PC-3 (cell line): ENCODE measurements at regions of chr17 and their contacts with region 1.

Region 1: DNA sequence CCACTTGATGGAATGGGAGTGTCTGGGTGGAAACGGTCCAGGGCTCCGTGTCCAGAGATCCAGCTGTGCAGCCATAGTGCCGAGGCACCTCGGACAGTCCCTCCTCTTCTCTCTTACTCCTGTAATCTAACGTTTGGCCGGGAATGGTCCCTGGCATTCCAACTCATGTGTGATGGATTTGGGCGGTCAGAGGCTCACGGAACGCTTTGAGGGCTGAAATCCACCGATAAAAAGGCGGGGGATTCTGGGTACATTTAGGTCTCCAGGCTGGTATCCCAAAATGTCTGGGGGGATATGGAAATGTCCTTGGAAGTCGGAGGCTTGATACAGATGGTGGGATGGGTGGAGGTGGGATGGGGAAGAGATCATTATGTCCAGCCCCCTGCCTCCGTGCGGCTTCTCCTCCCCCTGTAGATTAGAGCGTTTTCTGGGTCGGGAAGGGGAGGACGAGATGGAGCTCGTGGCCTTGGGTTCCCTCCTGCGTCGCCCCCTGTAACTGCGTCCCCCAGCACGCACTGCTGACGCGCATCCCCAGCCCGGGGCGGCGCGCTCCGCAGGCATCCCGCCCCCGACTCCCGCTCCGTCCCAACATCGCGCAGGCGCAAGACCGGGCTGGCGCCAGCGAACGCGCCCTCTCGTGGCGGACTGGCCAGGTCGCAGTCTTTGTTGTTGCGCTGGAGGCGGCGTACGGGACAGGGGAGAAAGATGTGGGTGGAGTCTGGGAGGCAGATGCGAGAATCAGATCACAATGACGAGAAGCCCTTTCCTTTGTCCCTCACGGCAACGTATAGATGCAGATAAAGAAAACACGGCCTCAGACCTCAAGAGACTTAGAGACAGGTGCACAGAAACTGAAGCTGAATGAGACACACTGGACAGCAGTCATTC is 4.5 kb upstream of the SGCA start:
- DNase-seq: peak; percentile 95
- ATAC-seq: peak; percentile 98
- H3K4me3 ChIP-seq: peak overlapping the region; percentile 70
- H3K27ac ChIP-seq: no peak overlapping the region
- H3K4me1 ChIP-seq: peaks cover 11% of the 10 kb centered on the region
- H3K27me3 ChIP-seq: no peaks in the 10 kb centered on the region
- CTCF ChIP-seq: peak; percentile 95

Region 2: GRCh38 chr17:50139950-50140871 is 21.1 kb before region 1 on chr17:
- CTCF ChIA-PET with region 1: no interaction called
- POLR2A ChIA-PET with region 1: no interaction called
- intact Hi-C with region 1: loop called (anchors 1 kb)
- DNase-seq: peak; percentile 68
- ATAC-seq: peak; percentile 84
- H3K4me3 ChIP-seq: no peak overlapping the region
- H3K27ac ChIP-seq: no peak overlapping the region
- H3K4me1 ChIP-seq: no peaks in the 10 kb centered on the region
- H3K27me3 ChIP-seq: no peaks in the 10 kb centered on the region
- CTCF ChIP-seq: peak; percentile 96

Region 3: DNA sequence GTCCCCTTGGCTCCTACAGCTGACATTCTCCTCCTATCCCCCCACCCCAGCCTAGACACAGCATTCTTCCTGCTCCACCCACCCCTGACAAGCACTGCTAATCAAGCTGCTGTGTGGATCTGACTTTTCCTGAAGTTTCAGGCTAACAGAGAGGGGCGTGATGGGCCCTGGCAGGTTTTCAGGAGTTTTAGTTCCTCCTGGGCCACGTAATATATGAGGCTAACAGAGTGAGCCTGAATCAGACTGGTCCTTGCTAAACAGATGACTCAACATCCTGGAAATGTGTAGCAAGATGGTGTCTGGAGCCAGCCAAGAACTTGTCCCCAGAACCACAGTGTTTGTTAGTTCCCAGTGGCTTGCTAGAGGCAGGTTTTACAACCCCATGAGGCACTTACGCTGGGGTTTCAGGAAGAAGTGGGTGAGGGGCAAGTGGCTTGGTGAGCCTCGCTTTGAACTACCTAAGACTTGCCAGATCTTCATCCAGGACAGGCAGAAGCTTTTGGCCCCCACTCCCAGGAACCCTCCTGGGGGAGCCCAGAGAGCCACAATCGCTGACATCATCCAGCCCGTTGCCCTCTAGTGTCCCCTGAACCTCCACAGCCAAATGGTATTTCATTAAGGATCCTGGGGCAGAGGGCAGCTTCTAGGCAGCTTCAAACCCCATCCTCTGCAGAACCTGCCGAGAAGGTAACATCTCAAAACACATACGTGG is 128.9 kb after region 1 on chr17:
- CTCF ChIA-PET with region 1: no interaction called
- POLR2A ChIA-PET with region 1: no interaction called
- intact Hi-C with region 1: no loop called
- DNase-seq: peak; percentile 98
- ATAC-seq: peak; percentile 94
- H3K4me3 ChIP-seq: peak overlapping the region; percentile 50
- H3K27ac ChIP-seq: peak overlapping the region; percentile 92
- H3K4me1 ChIP-seq: peaks cover 35% of the 10 kb centered on the region
- H3K27me3 ChIP-seq: no peaks in the 10 kb centered on the region
- CTCF ChIP-seq: no peak

Region 4: GRCh38 chr17:51046514-51047384 is 885.5 kb after region 1 on chr17:
- CTCF ChIA-PET with region 1: no interaction called
- POLR2A ChIA-PET with region 1: no interaction called
- intact Hi-C with region 1: no loop called
- DNase-seq: no peak
- ATAC-seq: no peak; the same call in 1 of the 2 replicates
- H3K4me3 ChIP-seq: no peak overlapping the region
- H3K27ac ChIP-seq: no peak overlapping the region
- H3K4me1 ChIP-seq: peaks cover 9% of the 10 kb centered on the region; the same call in 1 of the 2 replicates
- H3K27me3 ChIP-seq: no peaks in the 10 kb centered on the region
- CTCF ChIP-seq: no peak